MCF 10A (cell line): ENCODE measurements at regions of chr1 and their contacts with region 1.

Region 1: GRCh38 chr1:160768295-160768657 is 27.7 kb upstream of the LY9 start:
- DNase-seq: peak; percentile 60
- H3K4me3 Mint-ChIP-seq: peak overlapping the region; percentile 56
- H3K27ac Mint-ChIP-seq: peak overlapping the region; percentile 75
- H3K4me1 Mint-ChIP-seq: peaks cover 17% of the 10 kb centered on the region
- H3K27me3 Mint-ChIP-seq: no peaks in the 10 kb centered on the region
- CTCF ChIP-seq: peak; percentile 70

Region 2: GRCh38 chr1:160748181-160748877 is 19.9 kb before region 1 on chr1:
- CTCF ChIA-PET with region 1: interaction called, 22 read pairs
- POLR2A ChIA-PET with region 1: interaction called, 10 read pairs
- intact Hi-C with region 1: loop called (anchors 1 kb)
- DNase-seq: peak; percentile 70
- H3K4me3 Mint-ChIP-seq: no peak overlapping the region
- H3K27ac Mint-ChIP-seq: no peak overlapping the region
- H3K4me1 Mint-ChIP-seq: peaks cover 12% of the 10 kb centered on the region
- H3K27me3 Mint-ChIP-seq: no peaks in the 10 kb centered on the region
- CTCF ChIP-seq: peak; percentile 45